ENCODE measurements at regions of chr13 and their contacts with region 1.

Region 1: GRCh38 chr13:98445340-98446233 is 131.3 kb downstream of the STK24 start:
- DNase-seq: peak; percentile 90
- ATAC-seq: peak; percentile 88
- H3K4me3 Mint-ChIP-seq: no peak overlapping the region
- H3K27ac Mint-ChIP-seq: peak overlapping the region; percentile 70; the same call in 1 of the 2 replicates
- H3K4me1 Mint-ChIP-seq: peaks cover 21% of the 10 kb centered on the region
- H3K27me3 Mint-ChIP-seq: no peaks in the 10 kb centered on the region
- CTCF ChIP-seq: peak; percentile 97

Region 2: GRCh38 chr13:97975848-97976609 is 469.6 kb before region 1 on chr13:
- CTCF ChIA-PET with region 1: no interaction called
- POLR2A ChIA-PET with region 1: no interaction called
- DNase-seq: peak; percentile 89
- ATAC-seq: peak; percentile 87
- H3K4me3 Mint-ChIP-seq: peak overlapping the region; percentile 92
- H3K27ac Mint-ChIP-seq: peak overlapping the region; percentile 96
- H3K4me1 Mint-ChIP-seq: peaks cover 31% of the 10 kb centered on the region
- H3K27me3 Mint-ChIP-seq: no peaks in the 10 kb centered on the region
- CTCF ChIP-seq: no peak

Region 3: GRCh38 chr13:98026457-98026857 is 419.1 kb before region 1 on chr13:
- CTCF ChIA-PET with region 1: interaction called, 10 read pairs
- POLR2A ChIA-PET with region 1: interaction called, 3 read pairs
- DNase-seq: no peak
- ATAC-seq: peak; percentile 55
- H3K4me3 Mint-ChIP-seq: no peak overlapping the region
- H3K27ac Mint-ChIP-seq: no peak overlapping the region
- H3K4me1 Mint-ChIP-seq: peaks cover 22% of the 10 kb centered on the region
- H3K27me3 Mint-ChIP-seq: no peaks in the 10 kb centered on the region
- CTCF ChIP-seq: no peak

Region 4: DNA sequence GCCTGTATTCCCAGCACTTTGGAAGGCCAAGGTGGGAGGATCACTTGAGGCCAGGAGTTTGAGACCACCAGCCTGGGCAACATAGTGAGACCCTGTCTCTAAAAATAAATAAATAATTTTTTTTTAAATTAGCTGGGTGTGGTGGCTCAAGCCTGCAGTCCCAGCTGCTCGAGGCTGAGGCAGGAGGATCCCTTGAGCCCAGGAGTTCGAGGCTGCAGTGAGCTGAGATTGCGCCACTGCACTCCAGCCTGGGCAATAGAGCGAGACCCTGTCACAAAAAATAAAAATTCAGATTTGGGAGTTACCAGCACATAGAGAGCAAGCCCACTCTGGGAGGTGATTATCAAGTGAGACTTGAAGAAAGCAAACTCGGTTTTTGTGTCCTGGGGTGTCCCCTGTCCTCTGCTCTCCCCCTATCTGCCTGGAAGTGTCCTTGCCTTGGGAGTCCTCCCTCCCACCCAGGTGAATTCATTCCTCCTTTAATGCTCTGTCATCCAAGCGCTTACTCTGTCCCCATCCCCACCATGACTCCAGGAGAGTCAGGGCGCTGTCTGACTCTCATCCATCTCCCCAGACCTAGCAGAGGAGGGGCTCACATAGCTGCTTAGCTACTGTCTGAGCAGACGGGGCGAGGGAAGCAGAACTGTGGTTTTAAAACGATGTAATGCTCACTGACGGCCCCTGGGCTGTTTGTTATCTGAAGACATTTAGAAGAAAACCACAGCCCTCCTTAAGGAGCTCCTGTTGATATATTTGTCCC is 15.4 kb before region 1 on chr13:
- CTCF ChIA-PET with region 1: interaction called, 15 read pairs
- POLR2A ChIA-PET with region 1: no interaction called
- DNase-seq: no peak
- ATAC-seq: no peak
- H3K4me3 Mint-ChIP-seq: no peak overlapping the region
- H3K27ac Mint-ChIP-seq: peak overlapping the region; percentile 26; the same call in 1 of the 2 replicates
- H3K4me1 Mint-ChIP-seq: peaks cover 6% of the 10 kb centered on the region; the same call in 1 of the 2 replicates
- H3K27me3 Mint-ChIP-seq: no peaks in the 10 kb centered on the region
- CTCF ChIP-seq: no peak

Region 5: GRCh38 chr13:98478189-98479129 is 32.9 kb after region 1 on chr13:
- CTCF ChIA-PET with region 1: interaction called, 29 read pairs
- POLR2A ChIA-PET with region 1: interaction called, 3 read pairs
- DNase-seq: no peak
- ATAC-seq: peak; percentile 13
- H3K4me3 Mint-ChIP-seq: no peak overlapping the region
- H3K27ac Mint-ChIP-seq: peak overlapping the region; percentile 90
- H3K4me1 Mint-ChIP-seq: peaks cover 83% of the 10 kb centered on the region
- H3K27me3 Mint-ChIP-seq: no peaks in the 10 kb centered on the region
- CTCF ChIP-seq: no peak

Region 6: GRCh38 chr13:98598043-98598442 is 152.5 kb after region 1 on chr13:
- CTCF ChIA-PET with region 1: interaction called, 19 read pairs
- POLR2A ChIA-PET with region 1: no interaction called
- DNase-seq: no peak
- ATAC-seq: peak; percentile 87
- H3K4me3 Mint-ChIP-seq: no peak overlapping the region
- H3K27ac Mint-ChIP-seq: no peak overlapping the region
- H3K4me1 Mint-ChIP-seq: peaks cover 5% of the 10 kb centered on the region
- H3K27me3 Mint-ChIP-seq: no peaks in the 10 kb centered on the region
- CTCF ChIP-seq: no peak

Region 7: DNA sequence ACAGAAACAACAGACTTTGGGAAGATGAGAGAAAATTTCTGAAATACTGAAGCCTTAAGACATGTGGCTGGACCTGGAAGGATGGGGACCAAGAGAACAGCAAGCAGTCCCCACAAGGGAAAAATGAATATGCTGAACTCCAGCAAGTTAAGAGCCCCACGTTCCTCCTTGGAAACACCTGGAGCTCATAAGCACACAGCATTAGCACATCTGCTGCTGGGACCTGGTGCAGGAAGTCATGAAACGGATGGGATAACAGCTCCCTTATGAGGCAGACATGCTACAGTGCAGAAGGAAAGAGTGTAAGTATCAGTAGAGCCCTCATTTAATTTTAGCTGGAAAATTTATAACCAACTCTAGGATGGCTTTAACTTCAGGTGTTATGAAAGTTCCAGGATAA is 239.6 kb after region 1 on chr13:
- CTCF ChIA-PET with region 1: interaction called, 10 read pairs
- POLR2A ChIA-PET with region 1: no interaction called
- DNase-seq: no peak
- ATAC-seq: no peak
- H3K4me3 Mint-ChIP-seq: no peak overlapping the region
- H3K27ac Mint-ChIP-seq: no peak overlapping the region
- H3K4me1 Mint-ChIP-seq: peaks cover 46% of the 10 kb centered on the region
- H3K27me3 Mint-ChIP-seq: no peaks in the 10 kb centered on the region
- CTCF ChIP-seq: no peak

Region 8: DNA sequence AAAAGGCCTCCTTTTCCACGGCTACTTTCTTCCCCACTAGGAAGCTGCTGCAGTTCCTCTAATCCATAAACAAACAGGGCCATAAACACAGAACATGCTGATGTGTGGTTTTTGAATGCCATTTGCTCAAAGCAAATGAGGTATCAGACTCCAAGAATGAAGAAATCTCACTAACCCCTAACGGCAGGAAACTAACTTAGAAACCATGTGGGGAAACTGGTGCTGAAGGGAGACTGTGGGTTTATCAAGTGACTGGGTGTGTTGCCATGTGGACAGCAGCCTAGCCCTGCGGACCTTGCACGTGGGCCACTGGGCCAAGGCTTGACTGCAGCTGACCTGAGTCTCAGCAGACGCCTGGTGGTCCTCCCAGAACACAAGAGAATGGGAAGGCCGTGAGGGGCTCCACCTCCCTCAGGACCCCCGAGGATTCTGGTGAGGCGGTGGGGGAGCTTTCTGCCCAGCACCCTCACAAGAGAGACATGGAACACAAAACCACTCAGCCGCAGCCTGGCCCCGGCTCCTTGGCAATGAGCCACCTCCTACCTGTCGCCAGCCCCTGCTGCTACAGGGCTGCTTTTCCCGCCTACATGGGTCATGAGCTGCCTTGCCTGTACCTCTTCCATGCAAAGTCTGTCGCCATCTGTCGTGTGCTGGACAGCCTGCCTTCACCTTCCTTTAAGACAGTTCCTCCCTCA is 296.3 kb after region 1 on chr13:
- CTCF ChIA-PET with region 1: no interaction called
- POLR2A ChIA-PET with region 1: no interaction called
- DNase-seq: no peak
- ATAC-seq: no peak
- H3K4me3 Mint-ChIP-seq: no peak overlapping the region
- H3K27ac Mint-ChIP-seq: no peak overlapping the region
- H3K4me1 Mint-ChIP-seq: no peaks in the 10 kb centered on the region
- H3K27me3 Mint-ChIP-seq: peaks cover 3% of the 10 kb centered on the region; the same call in 1 of the 2 replicates
- CTCF ChIP-seq: no peak